Heart right ventricle (tissue), 16 donors: ENCODE measurements at regions of chr17 and their contacts with region 1.

Region 1: GRCh38 chr17:32319548-32319905 is 22.4 kb downstream of the C17orf75 start:
- DNase-seq: peak; percentile 67 to 76
- ATAC-seq: peak; percentile 87 to 93 (median 90)
- H3K4me3 ChIP-seq: peak overlapping the region in 1 of 10 donors; percentile 38
- H3K27ac ChIP-seq: no peak overlapping the region
- H3K4me1 ChIP-seq: peaks cover 0 to 15% (median 0%) of the 10 kb centered on the region in 9 donors
- H3K27me3 ChIP-seq: peaks cover 0 to 10% (median 2%) of the 10 kb centered on the region in 7 donors
- CTCF ChIP-seq: peak; percentile 91 to 94 (median 93)

Region 2: DNA sequence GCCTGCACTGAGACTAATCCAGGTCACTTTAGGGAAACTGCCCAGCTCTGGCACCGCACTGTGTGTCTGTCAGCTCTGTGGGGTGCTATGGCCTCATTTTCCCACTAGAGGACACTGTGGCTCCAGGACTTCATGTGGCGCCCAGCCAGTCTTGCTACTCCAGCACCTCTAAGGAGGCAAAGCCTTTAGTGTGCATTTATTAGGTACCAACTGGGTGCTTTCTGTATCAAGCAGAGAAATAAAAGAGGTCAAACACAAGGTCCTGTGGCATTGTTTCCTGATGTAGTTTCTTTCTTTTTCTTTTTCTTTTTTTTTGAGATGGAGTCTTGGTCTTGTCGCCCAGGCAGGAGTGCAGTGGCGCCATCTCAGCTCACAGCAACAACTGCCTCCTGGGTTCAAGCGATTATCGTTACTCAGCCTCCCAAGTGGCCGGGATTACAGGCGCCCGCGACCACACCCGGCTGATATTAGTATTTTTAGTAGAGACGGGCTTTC is 66.4 kb before region 1 on chr17:
- intact Hi-C with region 1: loop called (anchors 1 to 5 kb)
- DNase-seq: peak; percentile 69 to 77
- ATAC-seq: peak; percentile 82 to 97 (median 92)
- H3K4me3 ChIP-seq: no peak overlapping the region
- H3K27ac ChIP-seq: no peak overlapping the region
- H3K4me1 ChIP-seq: peaks cover 0 to 10% (median 0%) of the 10 kb centered on the region in 9 donors
- H3K27me3 ChIP-seq: peaks cover 0 to 6% (median 0%) of the 10 kb centered on the region in 7 donors
- CTCF ChIP-seq: peak; percentile 89 to 99 (median 97)

Region 3: GRCh38 chr17:32486111-32486700 is 166.7 kb after region 1 on chr17:
- intact Hi-C with region 1: no loop called
- DNase-seq: peak; percentile 51 to 76
- ATAC-seq: peak; percentile 48 to 84 (median 76)
- H3K4me3 ChIP-seq: peak overlapping the region in 9 of 10 donors; percentile 39 to 66 (median 59)
- H3K27ac ChIP-seq: peak overlapping the region in 9 of 10 donors; percentile 15 to 86 (median 72)
- H3K4me1 ChIP-seq: peaks cover 16 to 44% (median 33%) of the 10 kb centered on the region in 9 donors
- H3K27me3 ChIP-seq: no peaks in the 10 kb centered on the region
- CTCF ChIP-seq: no peak